ENCODE measurements at regions of chr19 and their contacts with region 1.

Region 1: DNA sequence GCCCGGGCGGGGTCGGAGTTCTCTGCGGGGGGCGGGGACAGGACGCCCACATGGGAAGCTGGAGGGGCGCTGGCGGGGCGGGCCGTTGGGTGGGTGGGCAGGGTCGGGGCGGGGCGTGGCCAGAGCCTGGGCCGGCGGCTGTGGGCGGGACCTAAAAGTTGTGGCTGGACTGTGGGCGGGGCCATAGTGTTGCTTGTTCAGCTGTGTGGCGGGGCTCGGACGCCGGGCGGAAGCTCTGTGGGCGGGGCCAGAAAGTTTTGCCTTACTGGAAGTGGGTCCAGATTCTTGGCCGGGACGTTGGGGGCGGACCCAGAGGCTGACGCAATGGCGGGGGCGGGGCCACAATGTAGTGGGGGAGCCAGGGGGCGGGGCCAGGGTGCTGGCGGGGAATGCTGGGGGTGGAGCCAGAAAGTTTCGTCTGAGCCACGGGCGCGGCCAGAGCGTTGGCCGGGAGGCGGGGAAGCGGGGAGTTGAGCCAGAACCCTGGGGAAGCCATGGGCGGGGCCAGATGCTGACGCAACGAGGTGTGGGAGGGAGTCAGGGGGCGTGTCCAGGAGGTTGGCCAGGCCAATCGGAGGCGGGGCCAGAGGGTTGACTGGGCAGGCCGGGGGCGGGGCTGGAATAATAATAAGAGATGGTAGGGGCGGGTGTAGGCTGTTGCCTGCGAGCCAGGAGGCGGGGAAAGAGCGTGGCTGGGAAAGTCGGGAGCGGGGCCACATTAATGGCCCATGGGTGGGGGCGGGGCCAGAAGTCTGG is 541 bp downstream of the CCDC9 start:
- DNase-seq: peak; percentile 100
- H3K4me3 Mint-ChIP-seq: peak overlapping the region; percentile 88
- H3K27ac Mint-ChIP-seq: peak overlapping the region; percentile 96
- H3K4me1 Mint-ChIP-seq: peaks cover 39% of the 10 kb centered on the region
- H3K27me3 Mint-ChIP-seq: no peaks in the 10 kb centered on the region

Region 2: DNA sequence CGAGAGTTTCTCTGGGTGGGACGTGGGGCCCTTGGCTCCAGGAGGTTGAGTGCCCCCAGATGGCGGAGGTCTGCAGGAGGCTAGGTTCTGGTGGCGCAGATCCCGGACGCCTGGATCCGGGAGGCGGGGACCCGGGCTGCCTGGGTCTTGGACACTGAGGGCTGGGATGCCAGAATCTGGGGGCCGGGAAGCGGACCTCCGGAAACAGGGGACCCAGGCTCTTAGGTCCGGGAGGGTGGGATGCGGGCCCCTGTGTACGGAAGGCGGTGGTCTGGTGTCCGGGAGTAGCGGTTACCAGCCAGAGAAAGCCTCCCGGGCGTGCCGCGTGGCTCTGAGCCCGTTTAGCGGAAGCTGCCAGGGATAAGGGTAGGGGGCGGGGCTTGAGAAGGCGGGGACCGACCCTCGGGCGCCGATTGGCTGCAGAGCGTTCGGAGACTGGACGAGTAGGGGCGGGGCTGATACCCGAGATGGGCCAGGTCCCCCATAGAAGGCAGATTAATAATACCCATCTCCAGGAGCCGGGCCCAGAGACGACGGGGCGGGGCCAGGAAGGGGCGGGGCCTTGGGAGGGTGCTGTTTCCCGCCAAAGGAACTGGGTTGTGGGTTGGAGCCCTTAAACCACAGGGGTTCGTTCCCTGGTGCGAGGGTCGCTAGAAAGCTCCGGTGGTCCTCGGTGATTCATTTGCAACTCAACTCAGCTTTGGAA is 468.5 kb before region 1 on chr19 and contains the start of gene SLC1A5:
- CTCF ChIA-PET with region 1: no interaction called
- intact Hi-C with region 1: loop called (anchors 1 kb)
- DNase-seq: peak; percentile 99
- H3K4me3 Mint-ChIP-seq: peak within 1 kb of the TSS; percentile 95
- H3K27ac Mint-ChIP-seq: peak within 1 kb of the TSS; percentile 99
- H3K4me1 Mint-ChIP-seq: peaks cover 38% of the 10 kb centered on the region
- H3K27me3 Mint-ChIP-seq: no peaks in the 10 kb centered on the region
- total RNA-seq, gene SLC1A5: 139 TPM

Region 3: DNA sequence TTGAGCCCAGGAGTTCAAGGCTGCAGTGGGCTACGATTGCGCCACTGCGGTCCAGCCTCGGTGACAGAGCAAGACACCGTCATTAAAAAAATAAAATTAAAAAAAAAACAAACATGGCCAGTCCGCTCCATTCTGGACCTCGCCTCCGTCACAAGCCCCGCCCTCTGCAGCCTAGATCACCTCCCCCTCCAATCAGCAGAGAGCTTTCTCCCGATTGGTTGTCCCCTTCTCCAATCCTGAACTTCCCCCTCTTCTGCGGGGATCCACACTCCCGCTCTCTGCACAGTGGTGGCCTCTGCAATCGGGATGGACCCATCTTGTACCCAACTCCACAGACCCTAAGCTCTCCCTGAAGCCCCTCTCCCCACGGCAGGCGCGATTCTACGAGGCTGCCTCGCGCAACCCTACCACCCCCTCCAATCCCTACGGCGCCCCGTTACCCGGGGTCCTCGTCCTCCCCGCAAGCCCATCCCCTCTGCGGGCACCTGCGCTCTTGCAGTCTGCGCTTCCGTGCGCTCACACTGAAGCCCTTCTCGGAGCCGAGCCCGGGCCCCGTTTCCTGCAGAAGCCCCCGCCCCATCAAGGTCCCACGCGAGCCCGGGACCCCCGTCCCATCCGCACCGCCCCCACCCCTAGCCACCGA is 209.0 kb before region 1 on chr19:
- CTCF ChIA-PET with region 1: no interaction called
- intact Hi-C with region 1: loop called (anchors 1 kb)
- DNase-seq: peak; percentile 91
- H3K4me3 Mint-ChIP-seq: peak overlapping the region; percentile 98
- H3K27ac Mint-ChIP-seq: peak overlapping the region; percentile 84
- H3K4me1 Mint-ChIP-seq: peaks cover 13% of the 10 kb centered on the region
- H3K27me3 Mint-ChIP-seq: no peaks in the 10 kb centered on the region

Region 4: GRCh38 chr19:47231215-47231984 is 25.5 kb before region 1 on chr19:
- CTCF ChIA-PET with region 1: no interaction called
- intact Hi-C with region 1: loop called (anchors 1 kb)
- DNase-seq: peak; percentile 95
- H3K4me3 Mint-ChIP-seq: peak overlapping the region; percentile 77
- H3K27ac Mint-ChIP-seq: peak overlapping the region; percentile 87
- H3K4me1 Mint-ChIP-seq: peaks cover 22% of the 10 kb centered on the region
- H3K27me3 Mint-ChIP-seq: no peaks in the 10 kb centered on the region

Region 5: GRCh38 chr19:47348819-47349795 is 92.2 kb after region 1 on chr19 and contains the start of gene DHX34:
- CTCF ChIA-PET with region 1: no interaction called
- intact Hi-C with region 1: loop called (anchors 1 kb)
- DNase-seq: peak; percentile 99
- H3K4me3 Mint-ChIP-seq: peak within 1 kb of the TSS; percentile 100
- H3K27ac Mint-ChIP-seq: peak within 1 kb of the TSS; percentile 88
- H3K4me1 Mint-ChIP-seq: peaks cover 43% of the 10 kb centered on the region
- H3K27me3 Mint-ChIP-seq: no peaks in the 10 kb centered on the region
- total RNA-seq, gene DHX34: 11.2 to 11.6 TPM

Region 6: DNA sequence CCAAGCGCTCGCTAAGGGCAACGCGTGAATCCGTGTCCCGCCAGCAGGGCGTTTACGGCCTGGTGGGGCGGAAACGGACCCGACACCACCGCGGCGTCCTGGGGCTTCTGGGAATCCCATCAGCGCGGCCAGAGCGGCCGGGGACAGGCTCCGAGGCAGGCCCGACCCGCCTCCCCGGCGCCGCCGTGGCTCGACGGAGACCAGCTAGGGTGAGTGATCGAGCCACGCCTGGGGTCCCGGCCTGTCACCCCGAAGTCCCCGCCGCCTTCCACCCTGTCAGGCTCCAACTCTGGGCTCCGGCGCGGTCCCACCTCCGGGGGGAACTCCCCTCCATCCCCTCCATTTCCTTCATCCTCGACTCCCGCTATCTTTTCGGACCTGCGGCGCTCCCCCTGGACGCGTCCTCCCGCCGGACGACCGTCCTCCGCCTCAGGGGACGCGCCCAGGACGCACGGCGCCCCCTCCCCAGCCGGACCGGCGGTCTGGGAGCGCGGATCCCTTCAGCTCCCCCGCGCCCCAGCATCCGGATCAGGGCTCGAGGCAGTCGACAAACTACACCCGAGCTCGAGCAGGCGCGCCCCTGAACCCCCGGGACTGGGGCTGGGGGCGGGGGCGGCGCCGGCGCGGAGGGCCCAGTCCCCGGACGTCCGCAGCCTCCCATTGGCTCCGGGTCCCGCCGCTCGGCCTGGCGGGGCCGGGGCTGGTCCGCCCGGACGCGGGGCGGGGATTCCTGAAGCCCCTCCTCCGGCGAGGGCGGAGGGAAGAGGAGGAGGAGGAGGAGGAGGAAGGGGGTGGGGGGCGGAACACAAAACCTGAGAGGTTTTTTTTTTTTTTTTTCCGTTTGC is 351.4 kb after region 1 on chr19:
- CTCF ChIA-PET with region 1: no interaction called
- intact Hi-C with region 1: loop called (anchors 1 kb)
- DNase-seq: peak; percentile 96
- H3K4me3 Mint-ChIP-seq: peak overlapping the region; percentile 81
- H3K27ac Mint-ChIP-seq: peak overlapping the region; percentile 72
- H3K4me1 Mint-ChIP-seq: peaks cover 21% of the 10 kb centered on the region
- H3K27me3 Mint-ChIP-seq: no peaks in the 10 kb centered on the region